ENCODE measurements at regions of chr1 and their contacts with region 1.

Region 1: DNA sequence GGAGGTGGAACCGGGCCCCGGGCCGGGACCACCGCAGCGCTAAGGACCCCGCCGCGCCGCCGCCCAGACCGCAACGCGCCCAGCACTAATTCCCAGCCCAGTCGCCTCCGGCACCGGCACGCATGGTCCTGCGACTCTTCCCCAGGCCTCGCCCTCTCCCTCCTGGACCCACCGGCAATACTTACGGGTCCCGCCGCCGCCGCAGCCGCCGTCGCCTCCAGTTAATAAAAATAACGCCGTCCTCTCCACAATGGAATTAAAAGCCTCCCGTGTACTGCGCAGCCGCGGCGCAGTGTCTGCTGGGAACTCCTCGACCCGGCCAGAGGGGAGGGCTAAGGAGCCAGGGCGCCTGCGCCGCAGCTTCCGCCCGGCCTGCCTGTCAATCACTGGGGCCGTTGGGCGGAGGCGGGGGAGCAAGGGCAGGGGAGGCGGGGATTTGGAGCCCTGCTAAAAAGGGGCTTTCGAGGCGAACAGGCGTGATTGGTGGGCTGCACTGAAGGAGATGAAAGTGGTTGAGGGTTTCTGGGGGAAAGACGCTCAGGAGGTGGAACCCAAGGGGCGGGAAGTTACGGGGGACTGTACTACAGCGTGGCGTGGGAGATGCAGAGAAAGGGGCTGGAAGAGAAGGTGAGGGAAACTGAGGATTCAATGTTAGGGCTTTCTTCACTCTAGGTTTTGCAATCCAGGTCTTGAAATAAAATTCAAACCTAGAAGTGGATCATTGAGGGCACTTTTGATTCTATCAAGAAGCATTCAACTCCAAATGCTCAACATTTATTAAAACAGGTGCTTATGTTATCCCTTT is at the start of gene ZNF281:
- DNase-seq: peak; percentile 92
- H3K4me3 Mint-ChIP-seq: peak within 1 kb of the TSS; percentile 91
- H3K27ac Mint-ChIP-seq: peak within 1 kb of the TSS; percentile 85
- H3K4me1 Mint-ChIP-seq: peaks cover 53% of the 10 kb centered on the region
- H3K27me3 Mint-ChIP-seq: peaks cover 13% of the 10 kb centered on the region
- total RNA-seq, gene ZNF281: 18.9 and 19.0 TPM in 2 replicates

Region 2: GRCh38 chr1:200351826-200352549 is 58.0 kb before region 1 on chr1:
- intact Hi-C with region 1: loop called (anchors 5 kb)
- DNase-seq: no peak
- H3K4me3 Mint-ChIP-seq: peak overlapping the region; percentile 34
- H3K27ac Mint-ChIP-seq: peak overlapping the region; percentile 24
- H3K4me1 Mint-ChIP-seq: peaks cover 44% of the 10 kb centered on the region
- H3K27me3 Mint-ChIP-seq: peaks cover 5% of the 10 kb centered on the region

Region 3: DNA sequence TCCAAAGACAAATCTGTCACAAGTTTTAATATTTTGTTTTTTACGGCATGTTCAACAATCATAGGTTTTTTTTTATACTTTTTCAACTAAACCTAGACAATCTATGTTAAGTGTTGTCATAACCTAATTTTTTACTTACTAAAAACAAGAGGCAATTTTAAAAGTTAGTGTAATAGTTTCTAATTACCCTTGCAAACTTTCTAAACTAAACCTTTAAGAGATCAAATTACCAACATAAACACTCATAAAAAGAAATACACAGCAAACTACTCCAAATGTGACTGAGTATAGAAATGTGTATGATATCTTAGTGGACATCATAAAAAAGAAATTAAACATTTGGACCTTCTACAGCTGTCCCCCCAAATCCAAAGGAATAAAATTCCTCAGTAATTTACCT is 10.1 kb before region 1 on chr1:
- intact Hi-C with region 1: no loop called
- DNase-seq: no peak
- H3K4me3 Mint-ChIP-seq: no peak overlapping the region
- H3K27ac Mint-ChIP-seq: no peak overlapping the region
- H3K4me1 Mint-ChIP-seq: peaks cover 2% of the 10 kb centered on the region
- H3K27me3 Mint-ChIP-seq: no peaks in the 10 kb centered on the region

Region 4: DNA sequence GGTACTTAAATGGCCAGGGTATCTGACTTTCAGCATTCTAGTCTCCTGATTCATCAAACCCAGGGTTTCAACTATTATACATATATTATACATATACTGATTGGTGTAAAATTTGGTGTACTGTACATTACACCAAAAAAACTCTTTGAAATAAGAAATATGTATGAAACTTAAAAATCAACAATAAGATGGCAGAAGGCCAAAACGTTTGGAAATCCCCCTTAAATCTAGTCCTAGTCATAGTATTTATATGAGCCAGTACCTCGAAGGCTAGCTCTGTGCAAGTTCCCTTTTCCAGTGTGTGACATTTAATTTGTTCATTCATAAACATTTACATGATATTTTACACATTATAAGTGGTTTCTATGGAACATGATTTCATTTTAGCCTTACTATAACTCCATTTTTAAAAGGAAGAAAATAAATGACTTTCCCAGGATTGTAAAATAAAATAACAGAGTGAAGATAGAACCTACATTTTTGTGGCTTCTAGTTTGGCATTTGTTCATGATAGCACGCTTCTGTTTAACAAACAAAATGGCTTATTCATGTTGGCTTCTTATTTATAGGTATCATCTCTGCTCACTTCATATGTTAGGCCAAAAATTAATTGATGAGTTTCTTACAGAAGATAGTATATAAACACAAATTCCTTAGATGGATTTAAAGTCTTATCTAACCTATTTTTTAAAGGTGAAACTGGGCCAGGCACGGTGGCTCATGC is 18.7 kb after region 1 on chr1:
- intact Hi-C with region 1: loop called (anchors 2 kb)
- DNase-seq: no peak
- H3K4me3 Mint-ChIP-seq: no peak overlapping the region
- H3K27ac Mint-ChIP-seq: no peak overlapping the region
- H3K4me1 Mint-ChIP-seq: peaks cover 16% of the 10 kb centered on the region
- H3K27me3 Mint-ChIP-seq: no peaks in the 10 kb centered on the region

Region 5: DNA sequence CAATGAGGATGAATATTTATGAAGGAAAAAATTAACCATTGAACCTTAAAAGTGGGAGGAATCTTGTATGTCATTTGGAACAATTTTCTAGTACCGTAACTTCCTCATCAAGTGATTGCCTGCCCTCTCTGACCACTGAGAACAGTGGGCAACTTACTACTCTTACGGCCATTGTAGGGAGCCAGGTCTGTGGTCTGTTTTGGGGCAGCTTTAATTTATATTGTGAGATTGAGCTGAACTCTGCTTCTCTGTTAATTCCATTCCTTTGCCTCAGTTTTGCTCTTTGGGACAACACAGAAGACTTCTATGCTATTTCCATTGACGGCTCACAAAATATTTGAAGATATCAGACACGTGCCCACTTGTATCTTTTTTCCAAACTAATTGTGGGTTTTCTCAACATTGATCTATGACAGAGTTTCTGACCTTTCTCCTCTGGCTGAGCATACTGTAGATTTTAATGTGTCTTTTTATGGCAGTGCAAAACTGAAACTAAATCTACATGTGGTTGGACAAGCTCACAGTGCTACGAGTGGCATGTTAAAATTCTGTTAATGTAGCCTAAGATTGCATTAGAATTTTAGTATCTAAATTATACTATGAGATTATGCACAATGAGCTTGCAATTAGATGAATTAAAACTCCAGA is 27.7 kb after region 1 on chr1:
- intact Hi-C with region 1: loop called (anchors 2 kb)
- DNase-seq: no peak
- H3K4me3 Mint-ChIP-seq: peak overlapping the region; percentile 55
- H3K27ac Mint-ChIP-seq: peak overlapping the region; percentile 92
- H3K4me1 Mint-ChIP-seq: peaks cover 27% of the 10 kb centered on the region
- H3K27me3 Mint-ChIP-seq: no peaks in the 10 kb centered on the region

Region 6: GRCh38 chr1:200448034-200448762 is 38.2 kb after region 1 on chr1:
- intact Hi-C with region 1: loop called (anchors 1 kb)
- DNase-seq: no peak
- H3K4me3 Mint-ChIP-seq: peak overlapping the region; percentile 6
- H3K27ac Mint-ChIP-seq: peak overlapping the region; percentile 92
- H3K4me1 Mint-ChIP-seq: peaks cover 38% of the 10 kb centered on the region
- H3K27me3 Mint-ChIP-seq: peaks cover 5% of the 10 kb centered on the region

Region 7: DNA sequence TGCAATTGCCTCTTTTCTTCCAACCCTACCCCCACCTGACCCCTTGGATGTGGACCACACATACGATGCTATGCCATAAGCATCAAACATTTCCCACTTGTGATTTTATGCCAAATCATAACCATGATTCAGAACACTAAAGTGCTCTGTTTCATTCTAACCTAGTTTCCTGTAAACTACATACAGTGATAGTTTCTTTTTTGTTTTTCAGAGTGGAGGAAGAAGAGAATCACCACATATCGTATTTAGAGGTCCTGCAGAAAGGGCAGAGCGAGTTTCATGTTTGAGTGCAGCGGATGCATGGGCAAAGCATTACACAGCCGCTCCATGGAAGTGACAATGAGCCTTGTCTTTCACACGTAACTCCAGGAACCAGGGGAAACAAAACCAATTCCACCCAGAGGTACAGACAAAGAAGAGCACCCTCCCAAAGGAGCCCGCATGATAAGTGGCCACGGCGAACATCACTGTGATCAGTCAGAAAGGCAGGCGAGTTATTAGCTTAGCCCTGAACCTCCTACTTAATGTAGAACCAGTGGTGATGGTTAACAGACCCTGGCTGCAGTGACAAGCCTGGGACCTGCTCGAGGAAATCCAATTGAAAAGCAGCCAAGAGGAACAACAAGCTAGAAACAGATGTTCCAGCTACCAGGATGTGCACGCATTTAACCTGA is 63.9 kb after region 1 on chr1:
- intact Hi-C with region 1: no loop called
- DNase-seq: no peak
- H3K4me3 Mint-ChIP-seq: no peak overlapping the region
- H3K27ac Mint-ChIP-seq: peak overlapping the region; percentile 62
- H3K4me1 Mint-ChIP-seq: peaks cover 26% of the 10 kb centered on the region
- H3K27me3 Mint-ChIP-seq: peaks cover 33% of the 10 kb centered on the region

Region 8: DNA sequence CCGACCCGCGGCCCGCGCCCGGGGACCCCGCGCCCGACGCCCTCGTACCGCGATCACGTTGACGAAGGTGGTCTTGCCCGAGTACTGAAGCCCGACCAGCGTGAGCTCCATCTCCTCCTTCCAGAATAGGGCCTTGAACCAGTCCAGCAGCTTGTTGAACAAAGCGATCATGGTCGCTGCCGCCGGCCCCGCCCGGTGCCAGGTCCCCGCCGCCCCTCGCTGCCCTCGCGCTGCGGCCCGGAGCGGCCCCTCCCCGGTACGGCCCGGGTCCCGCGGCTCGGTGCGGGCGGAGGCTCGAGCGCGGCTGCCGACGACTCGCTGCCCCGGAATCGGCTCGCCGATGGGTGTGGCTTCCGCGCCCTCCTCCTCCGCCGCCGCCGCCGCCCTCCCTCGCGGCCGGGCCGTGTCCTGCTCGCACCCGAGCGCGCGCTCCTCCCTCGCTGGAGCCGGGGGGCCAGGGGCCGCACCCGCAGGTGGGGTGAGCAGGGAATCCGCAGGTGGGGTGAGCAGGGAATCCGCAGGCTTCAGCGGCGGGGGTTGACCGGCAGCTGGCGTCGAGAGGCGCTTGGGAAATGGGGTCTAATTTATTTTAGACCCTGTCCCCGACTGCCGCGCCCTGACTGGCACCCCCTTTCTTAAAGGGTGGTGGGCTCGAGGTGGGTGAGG is 1734.6 kb after region 1 on chr1 and contains the start of gene ARL8A:
- intact Hi-C with region 1: no loop called
- DNase-seq: peak; percentile 71
- H3K4me3 Mint-ChIP-seq: peak within 1 kb of the TSS; percentile 91
- H3K27ac Mint-ChIP-seq: peak within 1 kb of the TSS; percentile 92
- H3K4me1 Mint-ChIP-seq: peaks cover 29% of the 10 kb centered on the region
- H3K27me3 Mint-ChIP-seq: no peaks in the 10 kb centered on the region
- total RNA-seq, gene ARL8A: 57.9 and 64.7 TPM in 2 replicates

Measured in activated T-helper 2 cell treated with anti-CD3 and anti-CD28 coated beads, Interferon-gamma antibody, Interleukin-2, Interleukin-4, amounts not matched to agents 10 μg/mL and 5 μg/mL and 100 μg/mL, durations not matched to agents 14 hours and 24 hours and 36 hours (primary cell).